ENCODE measurements at regions of chr7 and their contacts with region 1.

Region 1: DNA sequence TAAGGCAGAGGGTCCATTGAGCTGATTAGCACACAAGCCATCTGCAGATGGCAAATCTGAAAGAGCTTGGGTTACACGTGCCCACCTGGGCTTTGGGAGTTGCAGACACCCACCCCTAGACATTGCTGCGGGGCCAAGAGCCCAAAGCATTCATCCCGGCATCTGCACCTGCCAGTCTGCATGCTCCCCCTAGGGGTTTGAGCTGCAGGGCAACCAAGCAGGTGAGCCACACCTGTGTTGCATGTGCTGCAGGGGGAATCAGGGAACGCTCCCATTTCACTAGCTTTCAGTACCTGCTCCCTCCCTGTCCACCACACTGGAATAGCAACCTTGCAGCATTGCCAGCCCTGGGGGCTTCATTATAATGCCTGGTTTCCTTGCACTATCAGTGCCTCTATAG is 21.1 kb downstream of the C7orf33 start:
- DNase-seq: peak; percentile 22 to 42
- H3K4me3 ChIP-seq: no peak overlapping the region
- H3K4me3 Mint-ChIP-seq: no peak overlapping the region
- H3K27ac Mint-ChIP-seq: no peak overlapping the region
- H3K4me1 ChIP-seq: peaks cover 12% of the 10 kb centered on the region
- H3K4me1 Mint-ChIP-seq: peaks cover 11% of the 10 kb centered on the region
- H3K27me3 ChIP-seq: no peaks in the 10 kb centered on the region
- H3K27me3 Mint-ChIP-seq: peaks cover 3% of the 10 kb centered on the region
- CTCF ChIP-seq: peak in 1 of 2 experiments; percentile 29

Region 2: GRCh38 chr7:148535217-148535616 is 76.5 kb before region 1 on chr7:
- CTCF ChIA-PET with region 1: no interaction called
- POLR2A ChIA-PET with region 1: no interaction called
- intact Hi-C with region 1: loop called (anchors 1 kb)
- DNase-seq: peak in 1 of 2 experiments; percentile 25
- H3K4me3 ChIP-seq: no peak overlapping the region
- H3K4me3 Mint-ChIP-seq: no peak overlapping the region
- H3K27ac Mint-ChIP-seq: no peak overlapping the region
- H3K4me1 ChIP-seq: no peaks in the 10 kb centered on the region
- H3K4me1 Mint-ChIP-seq: peaks cover 7% of the 10 kb centered on the region
- H3K27me3 ChIP-seq: no peaks in the 10 kb centered on the region
- H3K27me3 Mint-ChIP-seq: peaks cover 8% of the 10 kb centered on the region
- CTCF ChIP-seq: peak in 1 of 2 experiments; percentile 15

Region 3: DNA sequence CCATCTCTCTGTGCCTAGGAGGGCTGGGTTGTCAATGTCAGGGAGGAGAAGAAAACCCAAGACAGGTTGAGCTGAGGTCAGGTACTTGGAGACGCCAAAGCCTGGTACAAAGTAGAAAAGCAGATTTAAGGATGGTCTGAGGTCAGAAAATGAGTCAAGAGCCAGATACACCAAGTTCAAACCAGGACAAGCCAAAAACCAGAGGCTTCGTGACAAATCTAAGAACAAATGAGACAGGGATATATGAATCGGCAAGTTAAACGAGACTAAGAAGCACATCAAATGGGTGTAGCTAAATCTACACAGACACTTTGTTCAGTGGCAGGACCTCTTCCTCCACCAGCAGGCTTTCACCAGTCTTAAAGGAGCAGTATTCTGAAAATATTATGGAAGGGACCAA is 13.0 kb after region 1 on chr7:
- CTCF ChIA-PET with region 1: no interaction called
- POLR2A ChIA-PET with region 1: no interaction called
- intact Hi-C with region 1: loop called (anchors 1 kb)
- DNase-seq: no peak
- H3K4me3 ChIP-seq: no peak overlapping the region
- H3K4me3 Mint-ChIP-seq: no peak overlapping the region
- H3K27ac Mint-ChIP-seq: no peak overlapping the region
- H3K4me1 ChIP-seq: no peaks in the 10 kb centered on the region
- H3K4me1 Mint-ChIP-seq: peaks cover 13% of the 10 kb centered on the region
- H3K27me3 ChIP-seq: no peaks in the 10 kb centered on the region
- H3K27me3 Mint-ChIP-seq: no peaks in the 10 kb centered on the region
- CTCF ChIP-seq: no peak